A549 (cell line): ENCODE measurements at regions of chr1 and their contacts with region 1.

Region 1: DNA sequence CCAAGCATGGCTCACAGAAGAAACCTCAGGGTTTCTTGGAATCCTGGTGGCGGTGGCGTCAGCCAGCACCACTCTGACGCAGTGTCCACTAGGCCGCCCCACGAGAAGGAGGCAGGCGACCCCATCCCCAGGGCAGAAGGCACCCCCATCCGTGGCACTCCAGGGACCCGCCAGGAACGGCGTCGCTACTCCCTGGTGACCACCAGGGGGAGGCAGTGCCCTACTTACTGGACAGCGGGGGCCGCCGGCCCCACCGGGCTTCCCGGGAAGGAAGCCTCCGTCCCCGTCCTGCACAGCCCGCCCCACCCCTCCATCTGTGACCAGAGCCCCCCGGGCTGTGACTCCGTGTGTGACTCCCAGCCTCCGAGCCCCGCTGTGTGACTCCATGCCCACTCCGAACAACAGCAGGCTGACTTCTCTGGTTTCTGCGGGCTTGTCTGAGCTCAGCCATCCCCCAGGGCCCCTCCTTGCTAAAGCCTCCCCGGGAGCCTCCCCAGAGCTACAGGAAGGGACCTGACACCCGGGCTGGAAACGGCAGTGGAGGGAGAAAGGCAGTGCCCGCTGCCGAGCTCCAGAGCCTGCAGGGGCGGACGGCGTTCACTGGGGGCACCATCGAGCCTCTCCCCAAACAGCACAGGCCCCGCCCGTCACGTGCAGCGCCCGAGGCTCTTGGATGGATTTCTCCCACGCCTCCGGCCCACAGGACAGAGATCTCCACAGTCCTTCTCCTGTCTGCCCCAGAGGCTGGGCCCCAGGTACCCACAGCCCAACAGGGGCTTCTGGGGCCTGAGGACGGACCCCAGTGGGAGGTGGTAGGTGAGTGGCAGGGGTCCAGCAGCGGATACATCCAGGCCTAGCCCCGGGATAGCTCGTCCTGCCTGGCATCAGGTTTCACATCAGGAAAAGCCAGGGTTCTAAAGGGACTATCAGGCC is 21.1 kb downstream of the KIF17 start:
- DNase-seq: peak; percentile 87 to 89
- ATAC-seq: peak; percentile 94
- H3K4me3 ChIP-seq: peak overlapping the region; percentile 48
- H3K27ac ChIP-seq: peak overlapping the region; percentile 97
- H3K4me1 ChIP-seq: peaks cover 28% of the 10 kb centered on the region
- CTCF ChIP-seq: peak; percentile 81
- EP300 ChIP-seq: no peak
- POLR2A ChIP-seq: no peak
- RAD21 ChIP-seq: peak; percentile 81 to 96

Region 2: DNA sequence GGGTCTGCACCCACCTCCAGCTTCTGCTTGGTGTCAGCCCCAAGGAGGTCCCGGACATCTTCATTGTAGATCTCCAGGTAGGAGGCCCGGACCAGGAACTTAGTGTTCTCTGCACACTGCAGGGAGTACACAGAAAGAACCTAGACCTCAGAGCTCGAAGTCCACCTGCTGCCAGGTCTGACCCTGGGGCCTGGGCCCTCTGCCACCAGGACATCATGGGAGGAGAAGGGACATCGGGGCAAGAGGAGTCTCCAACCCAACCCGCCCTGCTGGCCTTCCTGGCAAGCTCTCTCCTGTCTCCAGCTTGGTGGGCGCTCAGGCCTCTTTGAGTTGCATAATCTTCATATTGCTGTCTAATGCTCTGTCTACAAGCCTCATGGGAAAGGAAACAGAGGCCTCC is 16.8 kb after region 1 on chr1:
- CTCF ChIA-PET with region 1: interaction called, 24 read pairs
- POLR2A ChIA-PET with region 1: interaction called, 4 read pairs
- DNase-seq: no peak
- ATAC-seq: no peak
- H3K4me3 ChIP-seq: no peak overlapping the region
- H3K27ac ChIP-seq: no peak overlapping the region
- H3K4me1 ChIP-seq: no peaks in the 10 kb centered on the region
- CTCF ChIP-seq: no peak
- EP300 ChIP-seq: no peak
- POLR2A ChIP-seq: no peak
- RAD21 ChIP-seq: no peak

Region 3: GRCh38 chr1:20896871-20897223 is 200.2 kb after region 1 on chr1:
- CTCF ChIA-PET with region 1: interaction called, 10 read pairs
- POLR2A ChIA-PET with region 1: interaction called, 4 read pairs
- DNase-seq: peak; percentile 18 to 93
- ATAC-seq: peak; percentile 94
- H3K4me3 ChIP-seq: no peak overlapping the region
- H3K27ac ChIP-seq: peak overlapping the region; percentile 89 to 92
- H3K4me1 ChIP-seq: peaks cover 77% of the 10 kb centered on the region
- CTCF ChIP-seq: no peak
- EP300 ChIP-seq: peak; percentile 90 to 94
- POLR2A ChIP-seq: no peak
- RAD21 ChIP-seq: peak; percentile 25 to 50

Region 4: GRCh38 chr1:21192284-21192683 is 495.6 kb after region 1 on chr1:
- CTCF ChIA-PET with region 1: interaction called, 55 read pairs
- POLR2A ChIA-PET with region 1: interaction called, 5 read pairs
- DNase-seq: no peak
- ATAC-seq: no peak
- H3K4me3 ChIP-seq: no peak overlapping the region
- H3K27ac ChIP-seq: no peak overlapping the region
- H3K4me1 ChIP-seq: peaks cover 6% of the 10 kb centered on the region
- CTCF ChIP-seq: no peak
- EP300 ChIP-seq: no peak
- POLR2A ChIP-seq: no peak
- RAD21 ChIP-seq: no peak